Mammary epithelial cell (primary cell): ENCODE measurements at regions of chr11 and their contacts with region 1.

Region 1: DNA sequence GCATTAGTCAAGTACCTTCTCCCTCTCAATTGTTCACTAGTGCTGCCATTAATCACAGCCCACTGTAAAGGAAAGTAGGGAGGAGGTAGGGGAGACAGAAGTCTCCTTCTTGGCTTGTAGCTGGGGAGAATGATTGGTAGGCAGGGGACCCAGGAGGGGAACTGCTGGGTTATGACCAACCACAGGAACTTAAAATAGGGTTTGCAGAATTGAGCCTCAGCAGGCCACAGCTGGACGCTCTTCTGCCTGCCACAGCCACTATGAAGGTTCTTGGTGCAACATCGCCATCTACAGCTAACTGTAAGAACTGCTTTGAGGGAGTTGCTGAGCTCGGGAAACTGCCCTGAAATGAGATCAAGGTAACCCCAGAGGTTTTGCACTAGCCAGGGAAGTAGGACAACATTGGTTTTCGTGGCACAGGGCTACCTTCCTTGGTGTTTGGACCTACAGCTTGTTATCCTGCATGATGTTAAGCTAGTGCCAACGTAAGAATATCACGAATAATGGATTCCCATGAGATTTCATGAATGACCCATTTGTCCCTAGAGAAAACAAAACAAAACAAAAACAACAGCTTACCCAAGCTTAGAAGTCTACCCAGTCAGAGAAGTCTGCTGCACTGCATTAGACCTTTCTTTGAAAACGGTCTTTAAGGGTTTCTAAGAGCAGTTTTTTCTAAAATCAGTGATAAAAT is 787.1 kb upstream of the API5 start:
- DNase-seq: peak; percentile 52
- H3K4me3 ChIP-seq: no peak overlapping the region
- H3K27ac ChIP-seq: no peak overlapping the region
- H3K4me1 ChIP-seq: no peaks in the 10 kb centered on the region
- H3K27me3 ChIP-seq: no peaks in the 10 kb centered on the region
- CTCF ChIP-seq: peak; percentile 85

Region 2: DNA sequence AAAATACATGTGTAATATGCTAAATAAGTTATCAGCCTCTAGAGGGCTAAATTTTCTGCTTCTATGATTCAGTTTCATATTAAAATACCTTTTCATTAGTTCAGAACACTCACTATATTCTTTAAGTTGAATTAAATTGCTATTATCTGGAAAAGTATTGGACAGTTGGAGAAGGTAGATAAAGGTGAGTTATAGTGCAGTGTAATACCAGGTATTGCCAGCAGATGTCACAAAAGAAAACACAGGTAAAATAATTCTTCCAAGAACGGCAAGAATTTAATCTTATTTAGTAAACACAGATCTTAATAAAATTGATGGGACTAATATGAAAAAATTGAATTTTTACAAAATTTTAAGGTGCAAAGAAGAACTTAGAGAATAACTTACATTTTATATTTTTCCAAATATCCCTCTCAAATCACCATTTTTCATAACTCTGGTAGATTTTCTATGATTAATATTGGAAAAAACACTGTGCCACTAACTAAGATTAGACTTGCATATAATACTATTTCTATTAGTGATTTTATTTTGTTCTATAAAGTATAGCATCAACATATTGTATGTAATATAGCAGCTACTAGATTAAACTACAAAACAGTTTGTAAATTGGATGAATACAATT is 1063.5 kb before region 1 on chr11:
- CTCF ChIA-PET with region 1: no interaction called
- dilution Hi-C with region 1: no loop called
- in situ Hi-C with region 1: loop called in 1 of 2 experiments (anchors 25 kb)
- intact Hi-C with region 1: loop called (anchors 1 kb)
- DNase-seq: peak; percentile 9
- H3K4me3 ChIP-seq: no peak overlapping the region
- H3K27ac ChIP-seq: no peak overlapping the region
- H3K4me1 ChIP-seq: no peaks in the 10 kb centered on the region
- H3K27me3 ChIP-seq: peaks cover 18% of the 10 kb centered on the region
- CTCF ChIP-seq: peak; percentile 71 to 75

Region 3: GRCh38 chr11:41498726-41499125 is 1026.0 kb before region 1 on chr11:
- CTCF ChIA-PET with region 1: no interaction called
- dilution Hi-C with region 1: no loop called
- in situ Hi-C with region 1: loop called in 1 of 2 experiments (anchors 25 kb)
- intact Hi-C with region 1: loop called (anchors 1 kb)
- DNase-seq: no peak
- H3K4me3 ChIP-seq: no peak overlapping the region
- H3K27ac ChIP-seq: no peak overlapping the region
- H3K4me1 ChIP-seq: peaks cover 10% of the 10 kb centered on the region
- H3K27me3 ChIP-seq: no peaks in the 10 kb centered on the region
- CTCF ChIP-seq: peak; percentile 46 to 51

Region 4: DNA sequence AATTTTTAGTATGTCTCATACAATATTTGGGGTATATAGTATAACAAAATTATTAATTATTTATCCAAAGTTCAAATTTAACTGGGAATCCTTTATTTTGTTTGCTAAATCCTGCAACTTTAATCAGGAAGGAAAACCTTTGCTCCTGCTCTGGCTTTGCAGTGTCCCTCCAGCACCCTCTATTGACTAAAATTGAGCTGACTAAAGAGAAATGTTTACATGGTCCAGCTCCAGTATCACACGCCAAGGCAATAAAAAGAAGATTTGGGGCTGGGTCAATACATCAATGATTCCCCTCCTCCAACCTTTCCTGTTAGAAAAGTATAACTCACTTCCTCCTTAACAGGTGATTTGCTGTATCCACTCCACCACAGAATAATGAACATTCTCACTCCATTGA is 912.3 kb before region 1 on chr11:
- CTCF ChIA-PET with region 1: interaction called, 3 read pairs
- dilution Hi-C with region 1: no loop called
- in situ Hi-C with region 1: no loop called
- intact Hi-C with region 1: loop called (anchors 5 kb)
- DNase-seq: peak; percentile 15
- H3K4me3 ChIP-seq: no peak overlapping the region
- H3K27ac ChIP-seq: no peak overlapping the region
- H3K4me1 ChIP-seq: peaks cover 7% of the 10 kb centered on the region
- H3K27me3 ChIP-seq: no peaks in the 10 kb centered on the region
- CTCF ChIP-seq: peak; percentile 55 to 75

Region 5: GRCh38 chr11:42593441-42593840 is 68.8 kb after region 1 on chr11:
- CTCF ChIA-PET with region 1: no interaction called
- dilution Hi-C with region 1: no loop called
- in situ Hi-C with region 1: no loop called
- intact Hi-C with region 1: no loop called
- DNase-seq: no peak
- H3K4me3 ChIP-seq: no peak overlapping the region
- H3K27ac ChIP-seq: no peak overlapping the region
- H3K4me1 ChIP-seq: no peaks in the 10 kb centered on the region
- H3K27me3 ChIP-seq: no peaks in the 10 kb centered on the region
- CTCF ChIP-seq: no peak

Region 6: DNA sequence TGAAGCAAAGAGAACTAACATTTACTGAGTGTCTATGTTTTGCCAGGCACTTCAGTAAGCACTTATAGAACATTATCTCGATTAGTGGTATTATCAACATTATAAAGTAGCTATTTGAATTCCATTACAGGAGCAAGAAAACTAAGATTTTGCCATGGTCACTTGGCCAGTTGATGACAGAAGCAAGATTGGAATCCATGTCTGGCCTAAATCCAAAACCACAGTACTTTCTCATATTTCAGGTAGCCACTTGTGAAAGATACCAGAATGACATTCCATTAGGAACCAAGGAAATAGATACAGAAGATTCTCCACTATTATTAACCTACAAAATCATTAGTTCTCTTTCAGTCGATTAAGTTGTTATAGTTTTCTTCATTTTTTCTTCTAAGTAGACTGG is 96.1 kb after region 1 on chr11:
- CTCF ChIA-PET with region 1: no interaction called
- dilution Hi-C with region 1: no loop called
- in situ Hi-C with region 1: no loop called
- intact Hi-C with region 1: no loop called
- DNase-seq: peak; percentile 9
- H3K4me3 ChIP-seq: no peak overlapping the region
- H3K27ac ChIP-seq: no peak overlapping the region
- H3K4me1 ChIP-seq: no peaks in the 10 kb centered on the region
- H3K27me3 ChIP-seq: peaks cover 1% of the 10 kb centered on the region
- CTCF ChIP-seq: no peak

Region 7: GRCh38 chr11:42631220-42631843 is 106.7 kb after region 1 on chr11:
- CTCF ChIA-PET with region 1: no interaction called
- dilution Hi-C with region 1: no loop called
- in situ Hi-C with region 1: no loop called
- intact Hi-C with region 1: loop called (anchors 5 kb)
- DNase-seq: peak; percentile 66
- H3K4me3 ChIP-seq: no peak overlapping the region
- H3K27ac ChIP-seq: no peak overlapping the region
- H3K4me1 ChIP-seq: no peaks in the 10 kb centered on the region
- H3K27me3 ChIP-seq: no peaks in the 10 kb centered on the region
- CTCF ChIP-seq: peak; percentile 51 to 56